SK-N-SH (cell line): ENCODE measurements at regions of chr16 and their contacts with region 1.

Region 1: GRCh38 chr16:85393674-85394483 is 219.2 kb upstream of the GSE1 start:
- DNase-seq: peak; percentile 90
- H3K4me3 ChIP-seq: peak overlapping the region in 1 of 2 experiments; percentile 37; a peak in 1 of 4 replicates
- H3K27ac ChIP-seq: peak overlapping the region; percentile 75 to 99; a peak in 3 of 4 replicates
- H3K4me1 ChIP-seq: peaks cover 43 to 78% of the 10 kb centered on the region in 2 experiments
- H3K27me3 ChIP-seq: no peaks in the 10 kb centered on the region
- CTCF ChIP-seq: peak; percentile 88
- EP300 ChIP-seq: no peak
- RAD21 ChIP-seq: peak; percentile 71

Region 2: DNA sequence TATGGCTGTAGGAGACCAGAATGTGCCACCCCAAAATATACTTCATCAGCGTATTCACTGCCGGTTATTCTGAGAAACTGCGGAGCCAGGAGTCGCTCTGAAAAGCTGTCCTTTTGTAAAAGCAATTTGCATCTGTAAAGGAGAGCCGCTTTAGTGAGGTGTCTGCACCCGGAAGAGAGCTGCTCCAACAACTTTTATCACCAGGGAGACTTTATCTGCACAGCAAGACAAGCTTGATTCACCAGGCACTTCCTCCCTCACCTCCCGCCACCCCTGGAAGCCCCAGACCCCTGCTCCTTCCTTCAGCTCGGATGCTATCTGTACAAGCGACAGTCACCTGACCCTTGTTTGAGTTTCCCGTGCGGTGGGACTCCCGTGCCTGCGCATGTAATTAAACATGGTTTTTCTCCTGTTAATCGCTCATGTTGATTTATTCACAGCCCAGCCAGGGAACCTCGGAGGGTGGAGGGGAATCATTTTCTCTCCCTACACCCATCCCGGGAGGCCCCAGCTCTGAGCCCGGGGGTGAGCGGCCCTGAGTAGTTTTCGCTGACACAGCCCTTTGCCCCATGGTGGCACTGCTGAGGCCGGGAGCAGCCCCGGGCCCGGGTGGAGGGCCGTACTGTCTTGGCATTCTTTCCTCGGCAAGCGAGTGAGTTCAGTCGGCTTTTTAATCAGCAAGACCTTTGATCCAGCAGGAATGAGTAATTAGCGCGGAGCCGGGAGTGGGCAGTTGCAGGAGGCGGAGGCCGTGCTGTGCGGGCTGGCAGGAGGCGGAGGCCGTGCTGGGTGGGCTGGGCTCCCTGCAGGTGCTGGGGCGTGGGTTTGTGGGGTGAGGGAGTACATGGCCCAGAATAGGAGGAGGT is 58.9 kb before region 1 on chr16:
- CTCF ChIA-PET with region 1: no interaction called
- POLR2A ChIA-PET with region 1: no interaction called
- DNase-seq: peak; percentile 64
- H3K4me3 ChIP-seq: no peak overlapping the region
- H3K27ac ChIP-seq: peak overlapping the region in 1 of 2 experiments; percentile 65; a peak in 2 of 4 replicates
- H3K4me1 ChIP-seq: peaks cover 6 to 41% of the 10 kb centered on the region in 2 experiments; a peak in 2 of 4 replicates
- H3K27me3 ChIP-seq: no peaks in the 10 kb centered on the region
- CTCF ChIP-seq: no peak
- EP300 ChIP-seq: no peak
- RAD21 ChIP-seq: no peak

Region 3: DNA sequence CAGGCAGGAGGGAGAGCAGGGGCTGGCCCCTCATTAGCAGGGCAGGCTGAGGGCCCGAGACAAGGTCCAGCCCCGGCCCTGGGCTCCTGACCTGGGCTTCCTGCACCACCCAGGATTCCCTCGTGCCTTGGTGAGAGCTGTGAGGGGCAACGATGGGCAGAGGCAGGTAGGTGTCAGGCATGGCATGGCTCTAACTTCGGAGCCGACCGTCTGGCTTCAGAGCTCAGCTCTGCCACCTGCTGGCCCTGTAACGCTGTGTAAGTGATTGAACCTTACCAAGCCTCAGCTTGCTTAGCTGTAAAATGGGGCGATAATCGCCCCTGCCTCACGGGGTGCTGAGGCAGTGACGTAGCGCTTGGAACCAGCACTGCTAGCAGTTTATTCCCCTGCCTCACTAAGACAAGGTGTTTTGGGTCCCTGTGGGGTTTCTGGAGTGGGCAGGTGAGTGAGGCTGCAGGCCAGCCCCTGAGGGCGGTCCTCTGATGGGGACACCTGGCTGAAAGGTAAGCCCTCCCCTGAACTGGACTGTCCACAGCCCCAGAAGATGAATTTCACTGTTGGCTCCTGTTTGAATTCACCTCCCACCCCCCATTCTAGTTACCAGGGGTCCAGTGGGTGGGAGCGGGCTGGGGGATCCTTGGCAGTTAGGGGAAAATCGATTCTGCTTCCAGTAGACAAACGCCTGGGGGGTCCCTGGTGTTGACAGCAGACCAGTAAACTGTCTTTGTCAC is 34.5 kb after region 1 on chr16:
- CTCF ChIA-PET with region 1: interaction called, 16 read pairs
- POLR2A ChIA-PET with region 1: no interaction called
- DNase-seq: peak; percentile 73
- H3K4me3 ChIP-seq: no peak overlapping the region; a peak in 1 of 4 replicates
- H3K27ac ChIP-seq: no peak overlapping the region
- H3K4me1 ChIP-seq: peaks cover 0 to 55% of the 10 kb centered on the region in 2 experiments; a peak in 1 of 4 replicates
- H3K27me3 ChIP-seq: no peaks in the 10 kb centered on the region
- CTCF ChIP-seq: peak; percentile 57
- EP300 ChIP-seq: no peak
- RAD21 ChIP-seq: peak; percentile 63

Region 4: GRCh38 chr16:85564277-85565051 is 170.6 kb after region 1 on chr16:
- CTCF ChIA-PET with region 1: interaction called, 25 read pairs
- POLR2A ChIA-PET with region 1: no interaction called
- DNase-seq: no peak
- H3K4me3 ChIP-seq: no peak overlapping the region
- H3K27ac ChIP-seq: peak overlapping the region in 1 of 2 experiments; percentile 89; a peak in 2 of 4 replicates
- H3K4me1 ChIP-seq: peaks cover 13 to 45% of the 10 kb centered on the region in 2 experiments; a peak in 3 of 4 replicates
- H3K27me3 ChIP-seq: no peaks in the 10 kb centered on the region
- CTCF ChIP-seq: peak; percentile 64
- EP300 ChIP-seq: no peak
- RAD21 ChIP-seq: no peak